Motor neuron (in vitro differentiated cells): ENCODE measurements at regions of chr20 and their contacts with region 1.

Region 1: GRCh38 chr20:63381807-63382322 is 20.7 kb upstream of the CHRNA4 start:
- ATAC-seq: peak in 5 of 8 experiments; percentile 5 to 74 (median 12)
- H3K4me3 ChIP-seq: no peak overlapping the region
- H3K27ac ChIP-seq: no peak overlapping the region
- H3K4me1 ChIP-seq: peaks cover 41 to 46% of the 10 kb centered on the region in 2 donors

Region 2: GRCh38 chr20:63178889-63179686 is 202.8 kb before region 1 on chr20:
- in situ Hi-C with region 1: no loop called
- ATAC-seq: peak; percentile 36 to 66 (median 50)
- H3K4me3 ChIP-seq: peak overlapping the region; percentile 55 to 96 (median 88)
- H3K27ac ChIP-seq: peak overlapping the region; percentile 88 to 94
- H3K4me1 ChIP-seq: peaks cover 45 to 56% of the 10 kb centered on the region in 2 donors

Region 3: DNA sequence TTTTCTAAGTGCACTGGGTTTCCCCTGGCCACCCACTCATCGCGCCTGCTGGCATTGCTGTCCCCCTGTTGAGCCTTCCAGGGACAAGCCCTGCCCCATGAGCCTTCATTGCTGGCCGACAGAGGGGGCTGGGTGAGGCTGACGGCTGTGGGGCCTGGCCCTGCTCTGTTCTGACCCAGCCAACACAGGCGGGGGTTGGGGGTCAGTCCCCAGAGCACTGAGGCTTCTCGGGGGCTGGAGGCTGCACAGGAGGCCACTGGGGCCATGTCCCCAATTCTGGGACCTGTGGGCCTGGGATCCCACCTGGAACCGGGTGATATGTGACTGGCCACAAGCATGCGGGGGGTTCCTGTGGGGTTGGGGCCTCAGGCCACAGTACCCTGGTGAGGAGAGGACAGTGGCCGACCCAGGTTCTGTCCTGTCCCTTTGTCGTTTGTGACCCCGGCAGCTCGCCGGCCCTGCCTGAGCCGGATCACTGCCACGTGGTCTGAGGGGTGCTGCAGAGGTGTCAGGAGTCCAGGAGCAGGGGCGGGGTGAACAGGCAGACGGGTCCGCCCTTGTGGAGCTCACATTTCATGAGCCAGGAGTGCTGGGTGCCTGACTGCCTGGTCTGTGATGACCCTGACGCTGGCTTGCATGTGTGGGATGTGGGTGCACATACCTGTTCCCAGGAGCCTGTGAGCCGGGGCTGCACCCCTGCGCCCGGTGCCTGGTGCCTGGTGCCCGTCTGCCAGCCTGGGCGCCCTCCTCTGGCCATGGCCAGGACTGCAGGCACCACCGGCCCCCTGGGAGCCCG is 91.0 kb before region 1 on chr20:
- in situ Hi-C with region 1: loop called in 1 of 9 experiments (anchors 25 kb)
- ATAC-seq: peak; percentile 23 to 75 (median 40)
- H3K4me3 ChIP-seq: no peak overlapping the region
- H3K27ac ChIP-seq: peak overlapping the region in 1 of 2 donors; percentile 7
- H3K4me1 ChIP-seq: peaks cover 15 to 21% of the 10 kb centered on the region in 2 donors

Region 4: DNA sequence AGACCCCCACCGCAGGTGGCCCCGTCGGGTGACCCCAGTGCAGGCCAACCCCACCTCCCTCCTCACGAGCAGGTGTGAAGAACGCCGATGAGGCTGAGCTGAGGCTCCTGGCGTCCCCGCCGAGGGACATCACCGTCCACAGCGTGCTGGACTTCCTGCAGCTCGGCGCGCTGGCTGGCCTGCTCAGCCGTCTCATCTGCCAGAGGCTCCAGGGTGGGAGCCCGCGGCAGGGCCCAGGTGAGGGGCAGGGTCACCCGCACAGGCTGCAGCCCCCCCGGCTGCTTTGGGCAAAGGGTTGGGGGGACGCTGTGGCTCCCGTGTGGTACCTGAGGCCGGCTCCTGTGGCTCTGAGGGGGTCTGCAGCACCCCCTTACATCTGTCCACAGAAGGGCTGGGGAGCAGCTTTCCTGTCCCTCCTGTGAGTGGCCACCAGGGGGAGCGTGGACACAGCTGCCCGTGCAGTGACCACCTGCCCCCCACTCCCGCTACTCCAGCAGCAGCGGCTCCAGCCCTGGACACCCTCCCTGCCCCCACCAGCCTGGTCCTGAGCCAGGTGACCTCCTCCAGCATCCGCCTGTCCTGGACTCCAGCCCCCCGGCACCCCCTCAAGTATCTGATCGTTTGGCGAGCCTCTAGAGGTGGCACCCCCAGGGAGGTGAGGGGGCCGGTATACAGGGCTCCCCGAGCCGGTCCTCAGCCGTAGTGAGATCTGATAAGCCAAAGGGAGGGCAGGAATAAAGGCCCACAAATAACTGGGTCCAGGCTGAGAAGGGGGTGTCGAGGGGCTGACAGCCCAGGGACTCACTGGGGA is 72.4 kb before region 1 on chr20:
- in situ Hi-C with region 1: loop called in 2 of 9 experiments (anchors 10 kb)
- ATAC-seq: peak; percentile 71 to 93 (median 80)
- H3K4me3 ChIP-seq: no peak overlapping the region
- H3K27ac ChIP-seq: peak overlapping the region in 1 of 2 donors; percentile 31
- H3K4me1 ChIP-seq: peaks cover 32 to 35% of the 10 kb centered on the region in 2 donors